ENCODE measurements at regions of chr2 and their contacts with region 1.

Region 1: DNA sequence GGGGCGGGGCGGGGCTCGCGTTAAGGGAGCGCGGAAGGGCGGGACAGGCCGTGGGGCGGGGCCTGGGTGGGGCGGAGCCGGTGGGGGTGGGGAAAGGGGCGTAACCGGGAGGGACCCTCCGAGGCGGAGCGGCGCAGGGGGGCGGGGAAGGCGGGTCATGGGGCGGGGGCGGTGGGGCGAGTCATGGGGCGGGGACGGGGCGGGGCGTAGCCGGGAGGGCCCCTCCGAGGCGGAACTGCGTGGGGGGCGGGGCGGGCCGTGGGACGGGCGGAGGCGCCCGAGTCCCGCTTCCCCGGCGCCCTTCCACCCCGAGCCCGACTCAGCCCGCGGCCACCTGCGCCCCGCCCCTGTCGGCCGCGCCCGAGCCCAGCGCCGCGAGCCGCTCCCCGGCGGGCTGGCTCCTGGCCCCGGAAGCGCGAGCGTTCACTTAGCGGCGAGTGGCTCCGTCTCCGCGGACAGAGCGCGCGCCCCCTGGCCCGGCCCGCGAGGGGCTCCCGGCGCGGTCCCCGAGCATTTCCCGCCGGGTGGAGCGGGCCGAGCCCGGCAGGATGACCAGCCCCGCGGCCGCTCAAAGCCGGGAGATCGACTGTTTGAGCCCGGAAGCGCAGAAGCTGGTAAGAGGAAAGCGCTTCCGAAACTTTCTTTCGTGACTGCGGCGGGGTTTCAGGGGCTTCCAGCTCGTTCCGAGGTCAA is 64.7 kb downstream of the LRRFIP1 start:
- DNase-seq: peak; percentile 91
- H3K4me3 Mint-ChIP-seq: peak overlapping the region; percentile 99
- H3K27ac Mint-ChIP-seq: peak overlapping the region; percentile 98
- H3K4me1 Mint-ChIP-seq: peaks cover 67% of the 10 kb centered on the region
- H3K27me3 Mint-ChIP-seq: no peaks in the 10 kb centered on the region

Region 2: GRCh38 chr2:237085248-237086221 is 606.5 kb before region 1 on chr2 and contains the start of gene COPS8:
- intact Hi-C with region 1: loop called (anchors 5 kb)
- DNase-seq: peak; percentile 90
- H3K4me3 Mint-ChIP-seq: peak within 1 kb of the TSS; percentile 98
- H3K27ac Mint-ChIP-seq: peak within 1 kb of the TSS; percentile 98
- H3K4me1 Mint-ChIP-seq: peaks cover 15% of the 10 kb centered on the region
- H3K27me3 Mint-ChIP-seq: no peaks in the 10 kb centered on the region
- total RNA-seq, gene COPS8: 59.2 and 63.3 TPM in 2 replicates

Region 3: GRCh38 chr2:237315170-237315828 is 376.8 kb before region 1 on chr2:
- intact Hi-C with region 1: no loop called
- DNase-seq: no peak
- H3K4me3 Mint-ChIP-seq: no peak overlapping the region
- H3K27ac Mint-ChIP-seq: no peak overlapping the region
- H3K4me1 Mint-ChIP-seq: no peaks in the 10 kb centered on the region
- H3K27me3 Mint-ChIP-seq: peaks cover 2% of the 10 kb centered on the region

Region 4: DNA sequence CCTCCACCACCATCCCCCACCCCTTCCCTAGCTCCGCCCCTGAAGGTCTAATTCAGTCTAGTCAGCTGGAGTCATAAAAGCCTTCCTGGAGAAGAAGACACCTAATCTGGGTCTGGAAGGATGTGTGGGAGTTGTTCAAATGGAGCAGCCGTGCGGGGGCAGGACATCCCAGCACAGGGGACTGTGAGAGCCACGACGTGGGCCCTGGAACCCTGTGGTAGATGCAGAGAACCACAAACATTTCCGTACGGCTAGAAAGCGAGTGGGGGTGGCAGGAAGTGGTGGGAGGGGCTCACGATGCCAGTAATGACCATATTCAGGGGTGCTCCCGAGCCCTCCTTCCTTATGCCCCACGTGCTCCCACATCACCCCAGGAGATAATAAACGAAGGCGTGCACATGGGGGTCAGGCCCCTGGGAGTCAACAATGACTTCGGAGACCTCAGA is 257.2 kb before region 1 on chr2:
- intact Hi-C with region 1: loop called (anchors 1 kb)
- DNase-seq: peak; percentile 62
- H3K4me3 Mint-ChIP-seq: peak overlapping the region; percentile 82
- H3K27ac Mint-ChIP-seq: peak overlapping the region; percentile 91
- H3K4me1 Mint-ChIP-seq: peaks cover 91% of the 10 kb centered on the region
- H3K27me3 Mint-ChIP-seq: peaks cover 5% of the 10 kb centered on the region

Region 5: GRCh38 chr2:237662671-237663093 is 29.4 kb before region 1 on chr2:
- intact Hi-C with region 1: no loop called
- DNase-seq: no peak
- H3K4me3 Mint-ChIP-seq: no peak overlapping the region
- H3K27ac Mint-ChIP-seq: no peak overlapping the region
- H3K4me1 Mint-ChIP-seq: peaks cover 14% of the 10 kb centered on the region
- H3K27me3 Mint-ChIP-seq: peaks cover 32% of the 10 kb centered on the region

Region 6: GRCh38 chr2:237744613-237745249 is 52.7 kb after region 1 on chr2:
- intact Hi-C with region 1: loop called (anchors 1 kb)
- DNase-seq: peak; percentile 62
- H3K4me3 Mint-ChIP-seq: no peak overlapping the region
- H3K27ac Mint-ChIP-seq: peak overlapping the region; percentile 85
- H3K4me1 Mint-ChIP-seq: peaks cover 33% of the 10 kb centered on the region
- H3K27me3 Mint-ChIP-seq: no peaks in the 10 kb centered on the region

Region 7: DNA sequence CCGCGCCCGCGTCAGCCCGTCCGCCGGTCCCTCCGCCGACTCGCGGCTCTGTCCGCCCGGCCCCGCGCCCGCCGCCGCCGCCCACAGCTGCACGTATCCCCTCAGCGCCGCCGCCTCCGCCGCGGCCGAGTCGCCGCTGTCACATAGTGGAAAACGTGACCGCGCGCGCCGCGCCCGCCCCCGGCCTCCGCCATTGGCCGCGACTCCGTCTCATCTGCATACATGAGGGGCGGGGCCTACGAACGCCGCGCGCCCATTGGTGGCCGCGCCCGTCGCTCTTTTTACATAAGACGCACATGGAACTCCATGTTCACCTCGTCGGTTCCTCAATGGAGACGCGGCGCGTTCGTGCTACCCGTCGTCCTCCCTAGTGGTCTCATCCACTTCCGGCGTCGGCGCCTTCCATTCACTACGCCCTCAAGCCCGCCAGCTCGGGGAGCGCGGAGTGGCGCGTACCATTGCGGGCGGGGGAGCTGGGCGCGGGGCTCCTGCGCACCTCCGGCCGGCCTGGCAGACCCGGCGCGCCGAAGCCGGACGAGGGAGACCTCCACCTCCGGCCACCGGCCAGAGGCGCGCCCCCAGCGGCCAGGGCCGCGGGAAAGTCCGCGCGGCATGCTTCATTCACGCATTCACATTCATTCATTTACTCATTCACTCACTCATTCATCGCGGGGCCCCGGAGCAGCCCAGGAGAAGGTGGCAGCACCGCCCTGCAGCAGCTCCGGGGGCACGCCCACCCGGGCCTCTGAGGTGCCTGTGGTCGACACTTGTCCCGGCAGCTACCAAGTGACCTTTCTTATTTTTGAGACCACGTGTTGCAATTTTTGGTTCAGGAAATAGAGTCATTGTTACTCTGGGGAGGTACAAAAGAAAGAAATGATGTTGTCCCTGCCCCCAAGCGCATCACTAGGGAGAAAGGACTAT is 596.9 kb after region 1 on chr2:
- intact Hi-C with region 1: loop called (anchors 5 kb)
- DNase-seq: peak; percentile 97
- H3K4me3 Mint-ChIP-seq: peak overlapping the region; percentile 91
- H3K27ac Mint-ChIP-seq: peak overlapping the region; percentile 97
- H3K4me1 Mint-ChIP-seq: peaks cover 38% of the 10 kb centered on the region
- H3K27me3 Mint-ChIP-seq: peaks cover 4% of the 10 kb centered on the region

Measured in activated T-helper 1 cell treated with anti-CD3 and anti-CD28 coated beads, Interleukin-12 subunit alpha, Interleukin-12 subunit beta, Interleukin-2, Interleukin-4 antibody, amounts not matched to agents 30 ng/mL and 10 ng/mL and 1 ng/mL, durations not matched to agents 14 hours and 24 hours and 36 hours (primary cell).